ENCODE measurements at regions of chr14 and their contacts with region 1.

Region 1: DNA sequence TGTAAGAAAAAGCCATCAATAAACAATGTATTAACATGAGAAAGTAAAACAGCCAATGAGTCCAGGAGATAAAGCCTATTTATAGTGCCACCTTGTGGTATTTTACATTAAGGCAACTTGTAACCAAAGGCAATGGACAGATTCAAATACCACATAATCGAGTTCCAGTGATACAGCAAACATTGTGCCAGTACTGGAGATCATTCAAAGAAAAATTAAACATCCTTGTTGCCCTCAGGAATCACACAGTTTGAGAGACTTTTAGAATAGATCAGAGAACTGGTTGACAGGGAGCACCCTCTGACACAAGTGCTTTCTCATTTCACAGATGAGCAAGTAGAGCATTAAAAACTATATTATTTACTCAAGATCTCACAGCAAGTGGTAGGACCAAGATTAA is 98.1 kb downstream of the DDHD1 start:
- DNase-seq: peak in 4 of 5 donors; percentile 20 to 39 (median 30)
- H3K4me3 ChIP-seq: no peak overlapping the region
- H3K4me3 Mint-ChIP-seq: no peak overlapping the region
- H3K27ac ChIP-seq: no peak overlapping the region
- H3K27ac Mint-ChIP-seq: peak overlapping the region in 3 of 7 donors; percentile 30 to 66 (median 31)
- H3K4me1 ChIP-seq: no peaks in the 10 kb centered on the region
- H3K4me1 Mint-ChIP-seq: peaks cover 0 to 3% (median under 1%) of the 10 kb centered on the region in 4 donors
- H3K27me3 ChIP-seq: no peaks in the 10 kb centered on the region
- H3K27me3 Mint-ChIP-seq: no peaks in the 10 kb centered on the region

Region 2: DNA sequence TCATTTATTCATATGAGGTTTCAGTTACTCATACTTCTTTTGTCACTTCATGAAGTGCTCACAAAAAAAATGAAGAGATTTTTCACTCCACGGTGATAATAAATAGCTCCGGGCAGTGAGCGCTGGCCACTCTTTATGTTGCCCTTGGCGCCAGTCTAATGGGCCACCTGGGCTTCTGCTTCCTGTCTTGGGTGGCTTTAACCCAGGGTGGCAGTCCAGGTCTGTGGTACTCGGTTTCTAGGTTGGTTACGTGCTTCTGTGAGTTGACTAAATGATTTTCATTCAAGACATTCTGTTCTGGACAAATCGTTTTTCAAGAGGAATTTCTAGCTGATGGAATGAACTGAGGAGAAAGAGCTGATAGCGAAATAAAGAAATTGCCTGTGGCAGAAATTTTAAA is 951.6 kb before region 1 on chr14:
- CTCF ChIA-PET with region 1: no interaction called
- POLR2A ChIA-PET with region 1: no interaction called
- intact Hi-C with region 1: no loop called
- DNase-seq: no peak
- H3K4me3 ChIP-seq: no peak overlapping the region
- H3K4me3 Mint-ChIP-seq: no peak overlapping the region
- H3K27ac ChIP-seq: no peak overlapping the region
- H3K27ac Mint-ChIP-seq: no peak overlapping the region
- H3K4me1 ChIP-seq: no peaks in the 10 kb centered on the region
- H3K4me1 Mint-ChIP-seq: no peaks in the 10 kb centered on the region
- H3K27me3 ChIP-seq: no peaks in the 10 kb centered on the region
- H3K27me3 Mint-ChIP-seq: peaks cover 0 to 2% of the 10 kb centered on the region in 2 donors

Region 3: GRCh38 chr14:52824507-52824906 is 230.5 kb before region 1 on chr14:
- CTCF ChIA-PET with region 1: interaction called, 12 read pairs
- POLR2A ChIA-PET with region 1: no interaction called
- intact Hi-C with region 1: loop called (anchors 1 kb)
- DNase-seq: no peak
- H3K4me3 ChIP-seq: no peak overlapping the region
- H3K4me3 Mint-ChIP-seq: no peak overlapping the region
- H3K27ac ChIP-seq: no peak overlapping the region
- H3K27ac Mint-ChIP-seq: no peak overlapping the region
- H3K4me1 ChIP-seq: no peaks in the 10 kb centered on the region
- H3K4me1 Mint-ChIP-seq: peaks cover 0 to 7% (median 4%) of the 10 kb centered on the region in 4 donors
- H3K27me3 ChIP-seq: no peaks in the 10 kb centered on the region
- H3K27me3 Mint-ChIP-seq: peaks cover 1 to 3% of the 10 kb centered on the region in 2 donors

Region 4: GRCh38 chr14:52918486-52918885 is 136.5 kb before region 1 on chr14:
- CTCF ChIA-PET with region 1: no interaction called
- POLR2A ChIA-PET with region 1: no interaction called
- intact Hi-C with region 1: no loop called
- DNase-seq: peak; percentile 55 to 82 (median 75)
- H3K4me3 ChIP-seq: no peak overlapping the region
- H3K4me3 Mint-ChIP-seq: peak overlapping the region in 3 of 8 donors; percentile 13 to 48 (median 15)
- H3K27ac ChIP-seq: peak overlapping the region; percentile 57
- H3K27ac Mint-ChIP-seq: peak overlapping the region; percentile 88 to 95 (median 93)
- H3K4me1 ChIP-seq: peaks cover 24% of the 10 kb centered on the region
- H3K4me1 Mint-ChIP-seq: peaks cover 18 to 42% (median 26%) of the 10 kb centered on the region in 4 donors
- H3K27me3 ChIP-seq: no peaks in the 10 kb centered on the region
- H3K27me3 Mint-ChIP-seq: no peaks in the 10 kb centered on the region

Region 5: DNA sequence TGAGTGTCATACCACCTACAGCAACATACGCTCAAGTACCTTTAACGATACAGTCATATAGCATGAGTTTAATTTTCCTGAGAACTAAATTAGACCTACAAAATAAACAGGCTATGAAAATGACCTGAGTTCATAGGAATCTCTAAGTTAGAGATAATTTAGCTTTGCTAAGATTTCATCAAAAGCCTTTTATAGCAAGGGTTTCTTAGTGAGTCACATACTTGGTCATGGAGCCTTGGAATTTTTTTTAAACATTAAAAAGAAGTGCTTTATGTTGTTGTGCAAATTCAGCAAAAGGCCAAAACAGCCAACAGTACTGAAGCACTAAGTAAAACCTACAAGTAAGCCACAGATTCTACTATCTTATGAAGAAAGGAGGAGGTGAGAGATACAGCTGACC is 10.5 kb before region 1 on chr14:
- CTCF ChIA-PET with region 1: interaction called, 20 read pairs
- POLR2A ChIA-PET with region 1: no interaction called
- intact Hi-C with region 1: no loop called
- DNase-seq: no peak
- H3K4me3 ChIP-seq: no peak overlapping the region
- H3K4me3 Mint-ChIP-seq: no peak overlapping the region
- H3K27ac ChIP-seq: no peak overlapping the region
- H3K27ac Mint-ChIP-seq: no peak overlapping the region
- H3K4me1 ChIP-seq: no peaks in the 10 kb centered on the region
- H3K4me1 Mint-ChIP-seq: no peaks in the 10 kb centered on the region
- H3K27me3 ChIP-seq: no peaks in the 10 kb centered on the region
- H3K27me3 Mint-ChIP-seq: no peaks in the 10 kb centered on the region

Region 6: GRCh38 chr14:53109105-53110041 is 54.4 kb after region 1 on chr14:
- CTCF ChIA-PET with region 1: interaction called, 10 read pairs
- POLR2A ChIA-PET with region 1: no interaction called
- intact Hi-C with region 1: no loop called
- DNase-seq: peak; percentile 54 to 67 (median 64)
- H3K4me3 ChIP-seq: peak overlapping the region; percentile 48 to 57
- H3K4me3 Mint-ChIP-seq: no peak overlapping the region
- H3K27ac ChIP-seq: peak overlapping the region; percentile 71
- H3K27ac Mint-ChIP-seq: no peak overlapping the region
- H3K4me1 ChIP-seq: peaks cover 31% of the 10 kb centered on the region
- H3K4me1 Mint-ChIP-seq: peaks cover 2 to 30% (median 17%) of the 10 kb centered on the region in 4 donors
- H3K27me3 ChIP-seq: no peaks in the 10 kb centered on the region
- H3K27me3 Mint-ChIP-seq: no peaks in the 10 kb centered on the region

Measured in CD4-positive, alpha-beta memory T cell (primary cell).